Caco-2 (cell line): ENCODE measurements at regions of chr9 and their contacts with region 1.

Region 1: GRCh38 chr9:27394154-27394825 is 97.3 kb upstream of the EQTN start:
- DNase-seq: no peak
- H3K4me3 ChIP-seq: no peak overlapping the region
- H3K4me3 Mint-ChIP-seq: no peak overlapping the region
- H3K27ac Mint-ChIP-seq: no peak overlapping the region
- H3K4me1 ChIP-seq: peaks cover 24% of the 10 kb centered on the region
- H3K4me1 Mint-ChIP-seq: peaks cover 11% of the 10 kb centered on the region
- H3K27me3 ChIP-seq: no peaks in the 10 kb centered on the region
- H3K27me3 Mint-ChIP-seq: no peaks in the 10 kb centered on the region
- CTCF ChIP-seq: no peak

Region 2: GRCh38 chr9:27310582-27310981 is 83.7 kb before region 1 on chr9:
- CTCF ChIA-PET with region 1: no interaction called
- POLR2A ChIA-PET with region 1: no interaction called
- intact Hi-C with region 1: no loop called
- DNase-seq: no peak
- H3K4me3 ChIP-seq: no peak overlapping the region
- H3K4me3 Mint-ChIP-seq: no peak overlapping the region
- H3K27ac Mint-ChIP-seq: no peak overlapping the region
- H3K4me1 ChIP-seq: no peaks in the 10 kb centered on the region
- H3K4me1 Mint-ChIP-seq: no peaks in the 10 kb centered on the region
- H3K27me3 ChIP-seq: no peaks in the 10 kb centered on the region
- H3K27me3 Mint-ChIP-seq: peaks cover 3% of the 10 kb centered on the region
- CTCF ChIP-seq: no peak

Region 3: GRCh38 chr9:27436234-27436633 is 41.9 kb after region 1 on chr9:
- CTCF ChIA-PET with region 1: no interaction called
- POLR2A ChIA-PET with region 1: interaction called, 4 read pairs
- intact Hi-C with region 1: loop called (anchors 1 kb)
- DNase-seq: peak; percentile 47 to 48
- H3K4me3 ChIP-seq: no peak overlapping the region
- H3K4me3 Mint-ChIP-seq: no peak overlapping the region
- H3K27ac Mint-ChIP-seq: no peak overlapping the region
- H3K4me1 ChIP-seq: peaks cover 56% of the 10 kb centered on the region
- H3K4me1 Mint-ChIP-seq: peaks cover 45% of the 10 kb centered on the region
- H3K27me3 ChIP-seq: no peaks in the 10 kb centered on the region
- H3K27me3 Mint-ChIP-seq: no peaks in the 10 kb centered on the region
- CTCF ChIP-seq: no peak